ENCODE measurements at regions of chr19 and their contacts with region 1.

Region 1: GRCh38 chr19:18110596-18111232 is 13.1 kb downstream of the MAST3 start:
- DNase-seq: no peak
- H3K4me3 ChIP-seq: peak overlapping the region; percentile 92
- H3K27me3 ChIP-seq: no peaks in the 10 kb centered on the region
- CTCF ChIP-seq: no peak

Region 2: GRCh38 chr19:18167975-18168645 is 57.4 kb after region 1 on chr19:
- CTCF ChIA-PET with region 1: interaction called, 10 read pairs
- POLR2A ChIA-PET with region 1: no interaction called
- DNase-seq: no peak
- H3K4me3 ChIP-seq: no peak overlapping the region
- H3K27me3 ChIP-seq: no peaks in the 10 kb centered on the region
- CTCF ChIP-seq: peak; percentile 80